Mammary epithelial cell (primary cell): ENCODE measurements at regions of chr1 and their contacts with region 1.

Region 1: DNA sequence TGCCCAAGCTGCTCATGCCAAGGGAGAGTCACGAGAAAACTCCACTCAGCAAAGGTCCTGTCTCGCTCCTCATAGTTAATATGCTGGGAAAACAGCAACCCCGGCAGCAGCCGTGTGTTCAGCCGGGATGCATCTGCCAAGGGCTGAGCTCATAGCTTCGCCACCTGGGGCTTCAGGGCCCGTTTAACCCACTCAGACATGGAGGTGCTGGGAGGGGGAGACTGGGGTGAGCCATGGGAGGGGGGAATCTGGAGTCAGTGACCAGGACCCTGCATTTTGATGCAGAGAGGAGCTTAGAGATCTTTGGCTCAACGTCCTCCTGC is 283.4 kb downstream of the PTPRU start:
- DNase-seq: no peak
- H3K4me3 ChIP-seq: no peak overlapping the region
- H3K27ac ChIP-seq: no peak overlapping the region
- H3K4me1 ChIP-seq: no peaks in the 10 kb centered on the region
- H3K27me3 ChIP-seq: no peaks in the 10 kb centered on the region
- CTCF ChIP-seq: no peak

Region 2: GRCh38 chr1:29471443-29472313 is 48.1 kb before region 1 on chr1:
- CTCF ChIA-PET with region 1: no interaction called
- dilution Hi-C with region 1: loop called (anchors 10 kb)
- in situ Hi-C with region 1: no loop called
- intact Hi-C with region 1: no loop called
- DNase-seq: no peak
- H3K4me3 ChIP-seq: no peak overlapping the region
- H3K27ac ChIP-seq: no peak overlapping the region
- H3K4me1 ChIP-seq: no peaks in the 10 kb centered on the region
- H3K27me3 ChIP-seq: no peaks in the 10 kb centered on the region
- CTCF ChIP-seq: no peak